A673 (cell line): ENCODE measurements at regions of chr16 and their contacts with region 1.

Region 1: GRCh38 chr16:57892447-57893096 is 78.4 kb downstream of the CNGB1 start:
- DNase-seq: no peak
- H3K4me3 ChIP-seq: no peak overlapping the region
- H3K27ac ChIP-seq: no peak overlapping the region
- H3K4me1 ChIP-seq: peaks cover 20% of the 10 kb centered on the region
- H3K27me3 ChIP-seq: no peaks in the 10 kb centered on the region
- CTCF ChIP-seq: no peak

Region 2: DNA sequence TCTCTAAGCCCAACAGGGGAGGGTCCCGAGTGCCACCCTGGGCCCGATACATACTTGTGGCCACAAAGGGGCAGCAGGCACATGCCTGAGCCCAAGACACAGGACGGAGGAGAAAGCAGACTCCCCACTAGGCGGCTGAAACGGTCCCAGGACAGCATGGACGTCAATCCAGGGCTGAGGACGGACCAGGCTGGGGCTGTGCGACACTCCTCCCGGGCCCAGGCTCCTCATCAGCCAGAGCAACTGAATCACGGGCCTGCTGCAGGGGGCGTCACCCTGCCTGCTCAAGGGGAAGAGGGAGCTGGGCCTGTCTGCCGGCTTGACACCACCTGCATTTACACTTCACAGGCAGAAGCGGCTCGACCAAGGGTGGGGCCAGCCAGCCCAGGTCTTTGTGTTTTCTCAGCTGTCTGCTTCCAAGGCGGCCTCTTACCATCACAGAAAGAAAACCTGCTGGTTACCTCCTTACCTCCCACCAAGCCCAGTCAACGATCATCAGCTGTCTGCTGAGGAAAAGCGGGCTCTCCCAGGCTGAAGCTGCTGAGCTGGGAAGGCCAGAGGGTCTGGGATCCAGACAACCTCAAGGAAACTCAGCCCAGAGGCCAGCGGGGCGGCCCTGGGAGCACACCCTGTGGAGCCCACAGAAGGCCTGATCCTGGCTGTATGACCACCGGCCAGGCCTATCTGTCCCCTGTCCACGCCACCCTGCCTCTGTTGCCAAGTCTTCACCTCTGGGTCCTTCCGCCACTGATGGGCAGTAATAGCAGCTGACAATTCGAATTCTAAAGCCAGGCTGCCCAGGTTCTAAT is 116.7 kb before region 1 on chr16:
- CTCF ChIA-PET with region 1: no interaction called
- POLR2A ChIA-PET with region 1: no interaction called
- intact Hi-C with region 1: no loop called
- DNase-seq: no peak
- H3K4me3 ChIP-seq: no peak overlapping the region
- H3K27ac ChIP-seq: peak overlapping the region; percentile 40
- H3K4me1 ChIP-seq: no peaks in the 10 kb centered on the region
- H3K27me3 ChIP-seq: no peaks in the 10 kb centered on the region
- CTCF ChIP-seq: no peak

Region 3: DNA sequence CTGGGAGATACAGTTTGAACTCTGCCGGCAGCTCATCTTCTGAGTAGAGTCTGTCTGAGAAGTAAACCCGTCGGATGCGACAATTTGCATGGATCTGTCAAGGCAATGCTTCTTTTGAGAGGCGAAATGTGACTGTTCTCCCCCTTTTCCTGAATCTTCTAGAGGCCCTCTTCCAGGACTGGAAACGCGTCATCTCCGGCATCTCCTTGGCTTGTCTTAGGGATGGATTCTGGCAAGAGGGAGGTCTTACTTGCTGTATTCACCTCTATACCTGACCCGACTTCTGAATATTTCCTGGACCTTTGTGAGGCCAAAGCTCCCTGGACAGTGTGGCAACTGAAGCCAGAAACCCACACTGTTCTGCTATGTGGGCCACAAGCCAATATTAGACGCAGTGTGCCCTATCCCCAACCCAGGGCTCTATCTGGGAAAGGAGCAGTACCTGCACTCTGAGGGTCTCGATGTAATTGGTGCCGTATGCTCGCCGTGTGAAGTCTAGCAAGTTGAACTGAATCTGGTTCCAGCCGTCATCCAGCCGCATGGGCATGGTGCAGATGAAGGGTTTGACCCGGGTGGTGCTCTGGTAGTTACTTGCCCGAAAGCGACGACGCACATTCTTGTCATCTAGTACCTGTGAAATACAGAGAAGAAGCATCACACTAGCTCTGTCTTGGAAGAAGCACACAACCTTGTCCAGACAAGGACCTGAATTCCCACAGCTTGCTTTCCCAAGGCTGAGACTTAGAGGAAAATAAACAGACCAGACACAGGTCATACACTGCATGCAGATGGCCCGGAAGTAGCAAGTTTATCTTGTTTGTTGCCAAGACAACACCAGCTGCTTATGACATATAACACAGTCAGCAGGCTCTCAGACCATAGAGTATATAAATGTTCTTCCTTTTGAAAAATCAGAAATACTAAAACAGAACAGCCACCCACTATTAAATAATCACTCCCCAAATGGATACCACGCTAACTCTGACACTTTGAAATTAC is 222.6 kb after region 1 on chr16:
- CTCF ChIA-PET with region 1: interaction called, 13 read pairs
- POLR2A ChIA-PET with region 1: no interaction called
- intact Hi-C with region 1: no loop called
- DNase-seq: no peak
- H3K4me3 ChIP-seq: no peak overlapping the region
- H3K27ac ChIP-seq: no peak overlapping the region
- H3K4me1 ChIP-seq: peaks cover 16% of the 10 kb centered on the region
- H3K27me3 ChIP-seq: no peaks in the 10 kb centered on the region
- CTCF ChIP-seq: no peak

Region 4: DNA sequence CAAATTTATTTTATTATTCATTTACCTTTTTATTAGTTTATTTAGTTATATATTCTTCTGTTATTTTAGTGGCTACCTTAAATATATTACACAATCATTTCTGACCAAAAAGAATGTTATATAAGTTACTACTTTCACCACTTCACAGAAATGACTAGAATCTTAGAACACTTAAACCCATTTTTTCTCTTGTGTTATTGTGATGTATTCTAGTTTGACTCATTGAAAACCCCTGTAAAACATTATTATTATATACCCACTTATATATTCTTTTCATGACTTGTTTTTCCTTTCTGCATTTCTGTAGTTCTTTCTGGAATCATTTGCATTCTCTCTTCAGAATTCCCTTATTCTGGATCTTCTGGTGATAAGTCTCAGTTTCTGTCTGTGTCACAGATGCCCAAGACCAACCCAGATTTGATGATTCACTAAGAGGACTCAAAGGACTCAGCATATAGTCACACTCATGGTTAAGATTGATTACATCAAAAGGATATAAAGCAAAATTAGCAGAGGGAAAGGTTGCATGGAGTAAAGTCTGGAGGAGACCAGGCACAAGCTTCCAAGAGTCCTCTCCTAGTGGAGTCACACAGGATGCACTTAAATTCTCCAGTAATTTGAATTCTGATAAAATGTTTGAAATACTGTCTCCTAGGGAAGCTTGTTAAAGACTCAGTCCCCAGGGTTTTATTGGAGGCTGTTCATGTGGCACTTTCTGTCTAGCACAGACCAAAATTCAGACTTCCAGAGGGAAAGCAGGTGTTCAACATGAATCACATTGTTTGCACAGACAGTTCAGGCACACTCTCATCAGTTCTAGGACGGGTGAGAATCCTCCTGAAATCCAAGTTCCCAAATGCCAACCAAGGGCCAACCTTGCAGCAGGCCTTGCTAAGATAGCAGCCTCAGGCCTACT is 507.4 kb after region 1 on chr16:
- CTCF ChIA-PET with region 1: no interaction called
- POLR2A ChIA-PET with region 1: no interaction called
- intact Hi-C with region 1: no loop called
- DNase-seq: no peak
- H3K4me3 ChIP-seq: no peak overlapping the region
- H3K27ac ChIP-seq: no peak overlapping the region
- H3K4me1 ChIP-seq: no peaks in the 10 kb centered on the region
- H3K27me3 ChIP-seq: no peaks in the 10 kb centered on the region
- CTCF ChIP-seq: no peak